ENCODE measurements at regions of chr16 and their contacts with region 1.

Region 1: DNA sequence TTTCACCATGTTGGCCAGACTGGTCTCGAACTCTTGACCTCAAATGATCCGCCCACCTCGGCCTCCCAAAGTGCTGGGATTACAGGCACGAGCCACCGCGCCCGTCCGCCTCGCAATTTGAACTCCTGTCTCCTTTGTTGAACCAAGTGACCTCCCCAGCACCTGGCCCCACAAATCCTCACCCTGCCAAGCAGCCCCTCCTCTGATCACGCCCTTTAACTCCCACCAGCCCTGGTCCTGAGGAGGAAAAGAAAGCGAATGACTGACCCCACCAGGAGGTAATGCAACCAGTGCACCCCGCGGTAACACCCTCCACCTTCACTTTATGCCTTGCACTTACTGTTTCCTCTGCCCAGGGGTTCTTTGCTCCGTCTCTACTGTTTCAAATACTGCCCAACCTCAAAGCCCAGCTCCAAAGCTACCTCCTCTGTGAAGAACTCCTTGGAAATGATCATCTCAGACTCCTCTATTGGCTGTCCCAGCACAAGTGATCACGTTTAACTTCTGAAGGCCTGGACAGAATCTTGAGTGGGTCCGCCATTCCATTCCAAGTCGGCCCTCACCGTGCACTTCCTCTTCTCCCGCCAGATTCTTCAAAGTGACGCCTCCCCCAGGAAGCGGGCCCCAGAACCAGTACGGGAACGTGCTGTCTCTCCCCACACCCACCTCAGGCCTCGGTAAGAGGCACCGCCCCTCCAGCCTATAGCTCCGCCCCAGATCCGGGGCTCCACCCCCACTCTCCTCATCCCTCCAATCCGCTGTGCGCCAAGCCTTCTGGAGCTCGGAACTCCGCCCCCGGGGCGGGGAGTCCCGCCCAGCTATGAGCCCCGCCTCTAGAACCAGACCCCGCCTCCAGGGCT is 4.4 kb downstream of the CD19 start:
- DNase-seq: peak; percentile 83 to 90 (median 85)
- H3K4me3 ChIP-seq: peak overlapping the region in 1 of 4 donors; percentile 40
- H3K27ac ChIP-seq: no peak overlapping the region
- H3K4me1 ChIP-seq: no peaks in the 10 kb centered on the region
- H3K27me3 ChIP-seq: no peaks in the 10 kb centered on the region
- CTCF ChIP-seq: no peak
- POLR2A ChIP-seq: no peak

Region 2: GRCh38 chr16:28879841-28880588 is 56.1 kb before region 1 on chr16:
- intact Hi-C with region 1: loop called in 1 of 2 experiments (anchors 5 kb)
- DNase-seq: peak; percentile 86 to 93 (median 90)
- H3K4me3 ChIP-seq: peak overlapping the region in 3 of 4 donors; percentile 7 to 59 (median 18)
- H3K27ac ChIP-seq: no peak overlapping the region
- H3K4me1 ChIP-seq: peaks cover 9 to 11% of the 10 kb centered on the region in 2 donors
- H3K27me3 ChIP-seq: no peaks in the 10 kb centered on the region
- CTCF ChIP-seq: peak in 4 of 6 experiments; percentile 23 to 39 (median 34)
- POLR2A ChIP-seq: no peak

Region 3: GRCh38 chr16:29129514-29129913 is 193.4 kb after region 1 on chr16:
- intact Hi-C with region 1: no loop called
- DNase-seq: peak in 1 of 7 donors; percentile 44
- H3K4me3 ChIP-seq: no peak overlapping the region
- H3K27ac ChIP-seq: peak overlapping the region in 1 of 5 donors; percentile 44
- H3K4me1 ChIP-seq: peaks cover 0 to 3% of the 10 kb centered on the region in 2 donors
- H3K27me3 ChIP-seq: no peaks in the 10 kb centered on the region
- CTCF ChIP-seq: no peak
- POLR2A ChIP-seq: no peak

Measured in adrenal gland (tissue), 19 donors.